Dendritic cell treated with granulocyte-macrophage colony-stimulating factor and Interleukin-4, amounts not matched to agents 40 ng/mL and 50 ng/mL, for 4 days (primary cell): ENCODE measurements at regions of chr2 and their contacts with region 1.

Region 1: DNA sequence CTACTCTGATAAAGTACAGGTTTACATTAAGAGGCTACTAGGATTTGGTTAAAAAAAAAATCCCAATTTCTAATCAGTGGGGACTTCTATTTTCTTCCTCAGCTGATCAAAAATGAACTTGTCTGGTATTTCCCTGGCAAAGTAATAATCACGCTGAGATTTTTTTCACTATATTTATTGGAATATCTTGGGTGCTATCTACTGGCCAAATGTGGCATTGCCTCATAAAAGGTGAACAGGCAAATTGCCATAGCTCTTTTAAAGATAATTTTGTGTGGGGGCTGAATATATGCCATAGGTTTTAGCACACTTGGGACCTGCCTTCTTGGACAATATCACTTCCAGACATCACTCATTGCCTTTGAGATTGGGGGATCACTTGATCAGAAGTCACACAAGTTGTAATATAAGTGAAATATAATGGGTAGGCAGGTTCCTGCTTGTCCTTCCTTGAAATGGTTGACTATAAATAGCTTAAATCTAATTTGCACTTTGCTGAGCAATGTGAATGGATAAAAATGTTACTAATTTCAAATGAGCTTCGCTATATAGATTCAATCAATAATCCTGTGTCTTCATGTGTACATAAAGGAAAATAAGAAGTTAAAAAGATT is 7.0 kb upstream of the NXPH2 start:
- H3K4me3 Mint-ChIP-seq: no peak overlapping the region
- H3K27ac Mint-ChIP-seq: no peak overlapping the region
- H3K4me1 Mint-ChIP-seq: no peaks in the 10 kb centered on the region
- H3K27me3 Mint-ChIP-seq: peaks cover 11% of the 10 kb centered on the region

Region 2: DNA sequence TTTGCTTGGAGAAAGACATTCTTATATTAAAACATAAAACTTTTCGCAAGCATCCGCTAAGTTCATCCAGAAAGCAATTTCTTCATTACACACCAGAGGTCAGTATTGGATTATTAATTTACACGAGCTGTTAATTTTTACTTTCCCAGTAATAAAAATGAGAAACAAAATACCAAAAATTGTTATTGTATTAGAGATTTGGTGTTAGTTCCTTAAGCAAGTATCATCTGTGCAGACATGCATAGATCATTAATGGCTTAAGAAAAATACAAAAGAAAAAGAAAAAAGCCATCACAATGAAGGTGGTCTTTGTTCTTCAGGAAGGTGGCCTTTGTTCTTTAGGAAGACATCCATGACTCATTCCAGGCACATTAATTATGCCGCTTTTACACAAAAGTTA is 876.5 kb before region 1 on chr2:
- intact Hi-C with region 1: loop called (anchors 2 kb)
- H3K4me3 Mint-ChIP-seq: no peak overlapping the region
- H3K27ac Mint-ChIP-seq: no peak overlapping the region
- H3K4me1 Mint-ChIP-seq: no peaks in the 10 kb centered on the region
- H3K27me3 Mint-ChIP-seq: peaks cover 3% of the 10 kb centered on the region

Region 3: GRCh38 chr2:138373993-138374408 is 413.2 kb before region 1 on chr2:
- intact Hi-C with region 1: loop called (anchors 10 kb)
- H3K4me3 Mint-ChIP-seq: no peak overlapping the region
- H3K27ac Mint-ChIP-seq: no peak overlapping the region
- H3K4me1 Mint-ChIP-seq: no peaks in the 10 kb centered on the region
- H3K27me3 Mint-ChIP-seq: no peaks in the 10 kb centered on the region

Region 4: DNA sequence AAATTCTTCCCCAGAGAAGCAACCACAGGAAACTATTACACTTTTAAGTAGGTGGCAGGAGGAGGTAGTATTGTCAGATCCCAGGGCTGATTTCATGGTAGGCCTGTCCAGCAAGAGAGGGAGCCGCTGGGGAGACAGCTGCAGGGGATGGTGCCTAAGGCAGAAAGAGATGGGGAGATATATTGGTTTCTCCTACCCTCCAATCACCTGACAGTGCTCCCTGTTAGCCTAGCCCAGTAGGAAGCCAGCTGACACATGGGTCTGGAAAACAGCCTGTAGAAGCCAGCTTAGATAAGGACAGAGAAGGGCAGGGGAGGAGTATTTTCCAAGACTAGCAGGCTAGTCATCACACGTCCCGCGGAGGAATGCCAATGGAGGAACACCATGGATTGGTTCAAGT is 293.8 kb before region 1 on chr2:
- intact Hi-C with region 1: loop called (anchors 10 kb)
- H3K4me3 Mint-ChIP-seq: no peak overlapping the region
- H3K27ac Mint-ChIP-seq: no peak overlapping the region
- H3K4me1 Mint-ChIP-seq: peaks cover 11% of the 10 kb centered on the region
- H3K27me3 Mint-ChIP-seq: no peaks in the 10 kb centered on the region

Region 5: DNA sequence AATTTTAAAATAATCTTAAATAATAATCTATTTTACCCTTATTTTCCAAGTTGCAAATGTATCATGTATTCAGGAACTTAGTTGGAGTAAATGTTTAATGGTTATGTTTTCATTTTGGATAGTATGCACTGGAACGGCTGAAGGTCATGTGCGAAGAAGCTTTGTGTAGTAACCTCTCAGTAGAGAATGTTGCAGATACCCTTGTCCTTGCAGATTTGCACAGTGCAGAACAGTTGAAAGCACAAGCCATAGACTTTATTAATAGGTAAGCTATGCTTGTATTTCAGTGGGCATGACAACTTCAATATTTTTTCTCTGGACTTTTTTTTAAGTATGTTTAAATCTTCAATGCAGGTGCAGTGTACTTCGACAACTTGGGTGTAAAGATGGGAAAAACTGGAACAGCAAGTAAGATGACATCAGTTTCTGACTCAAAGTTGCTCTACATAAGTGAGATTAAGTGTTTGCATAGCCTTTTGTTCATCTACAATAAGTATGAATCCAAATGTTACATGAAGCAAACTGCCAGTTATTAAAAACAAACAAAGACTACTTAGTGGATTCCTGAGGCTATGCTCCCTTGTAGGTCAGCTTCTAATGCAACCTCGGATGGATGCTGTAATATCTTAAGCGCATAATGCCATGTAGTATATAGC is 222.4 kb before region 1 on chr2:
- intact Hi-C with region 1: loop called (anchors 10 kb)
- H3K4me3 Mint-ChIP-seq: no peak overlapping the region
- H3K27ac Mint-ChIP-seq: no peak overlapping the region
- H3K4me1 Mint-ChIP-seq: no peaks in the 10 kb centered on the region
- H3K27me3 Mint-ChIP-seq: no peaks in the 10 kb centered on the region